ENCODE measurements at regions of chr17 and their contacts with region 1.

Region 1: GRCh38 chr17:81808778-81809555 is 5.0 kb downstream of the GCGR start:
- DNase-seq: peak; percentile 77
- H3K4me3 ChIP-seq: no peak overlapping the region
- H3K27ac ChIP-seq: no peak overlapping the region
- H3K4me1 ChIP-seq: peaks cover 0 to 35% of the 10 kb centered on the region in 2 experiments; a peak in 1 of 4 replicates
- H3K27me3 ChIP-seq: peaks cover 70% of the 10 kb centered on the region
- CTCF ChIP-seq: peak; percentile 37
- EP300 ChIP-seq: no peak
- RAD21 ChIP-seq: no peak

Region 2: GRCh38 chr17:81608082-81608481 is 200.9 kb before region 1 on chr17:
- CTCF ChIA-PET with region 1: no interaction called
- POLR2A ChIA-PET with region 1: no interaction called
- DNase-seq: no peak
- H3K4me3 ChIP-seq: no peak overlapping the region
- H3K27ac ChIP-seq: no peak overlapping the region
- H3K4me1 ChIP-seq: no peaks in the 10 kb centered on the region
- H3K27me3 ChIP-seq: no peaks in the 10 kb centered on the region
- CTCF ChIP-seq: no peak
- EP300 ChIP-seq: no peak
- RAD21 ChIP-seq: no peak

Region 3: GRCh38 chr17:81733507-81734404 is 75.2 kb before region 1 on chr17:
- CTCF ChIA-PET with region 1: interaction called, 60 read pairs
- POLR2A ChIA-PET with region 1: no interaction called
- DNase-seq: peak; percentile 100
- H3K4me3 ChIP-seq: no peak overlapping the region; a peak in 1 of 4 replicates
- H3K27ac ChIP-seq: no peak overlapping the region
- H3K4me1 ChIP-seq: peaks cover 0 to 5% of the 10 kb centered on the region in 2 experiments; a peak in 1 of 4 replicates
- H3K27me3 ChIP-seq: no peaks in the 10 kb centered on the region; the same call in 1 of the 2 replicates
- CTCF ChIP-seq: peak; percentile 96
- EP300 ChIP-seq: no peak
- RAD21 ChIP-seq: peak; percentile 100

Region 4: DNA sequence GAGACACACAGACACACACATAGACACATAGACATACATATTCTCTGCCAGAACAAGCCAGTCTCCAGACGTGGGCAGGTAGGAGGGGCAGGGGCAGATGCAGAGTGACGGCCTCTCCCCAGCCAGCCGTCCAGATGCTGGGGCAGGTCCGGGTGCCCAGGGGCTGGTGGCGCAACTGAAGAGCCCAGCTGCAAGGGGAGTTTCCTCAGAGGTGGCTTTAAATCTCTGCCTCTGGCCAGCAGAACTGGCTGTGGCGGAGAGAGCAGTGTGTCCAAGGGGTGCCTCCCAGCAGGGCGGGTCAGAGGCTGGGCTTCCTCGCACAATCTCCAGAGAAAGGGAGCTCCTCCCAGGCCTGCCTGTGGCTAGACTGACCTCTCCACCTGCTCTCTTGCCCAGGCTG is 14.5 kb before region 1 on chr17:
- CTCF ChIA-PET with region 1: interaction called, 10 read pairs
- POLR2A ChIA-PET with region 1: interaction called, 3 read pairs
- DNase-seq: no peak
- H3K4me3 ChIP-seq: no peak overlapping the region
- H3K27ac ChIP-seq: no peak overlapping the region
- H3K4me1 ChIP-seq: no peaks in the 10 kb centered on the region; a peak in 1 of 4 replicates
- H3K27me3 ChIP-seq: peaks cover 5% of the 10 kb centered on the region
- CTCF ChIP-seq: no peak
- EP300 ChIP-seq: no peak
- RAD21 ChIP-seq: no peak

Region 5: GRCh38 chr17:81821603-81822311 is 12.8 kb after region 1 on chr17:
- CTCF ChIA-PET with region 1: interaction called, 17 read pairs
- POLR2A ChIA-PET with region 1: interaction called, 3 read pairs
- DNase-seq: peak; percentile 82
- H3K4me3 ChIP-seq: no peak overlapping the region
- H3K27ac ChIP-seq: peak overlapping the region in 1 of 2 experiments; percentile 23; a peak in 1 of 4 replicates
- H3K4me1 ChIP-seq: peaks cover 0 to 11% of the 10 kb centered on the region in 2 experiments; a peak in 1 of 4 replicates
- H3K27me3 ChIP-seq: no peaks in the 10 kb centered on the region; the same call in 1 of the 2 replicates
- CTCF ChIP-seq: peak; percentile 55
- EP300 ChIP-seq: no peak
- RAD21 ChIP-seq: peak; percentile 46

Measured in SK-N-SH (cell line).